Caco-2 (cell line): ENCODE measurements at regions of chr9 and their contacts with region 1.

Region 1: DNA sequence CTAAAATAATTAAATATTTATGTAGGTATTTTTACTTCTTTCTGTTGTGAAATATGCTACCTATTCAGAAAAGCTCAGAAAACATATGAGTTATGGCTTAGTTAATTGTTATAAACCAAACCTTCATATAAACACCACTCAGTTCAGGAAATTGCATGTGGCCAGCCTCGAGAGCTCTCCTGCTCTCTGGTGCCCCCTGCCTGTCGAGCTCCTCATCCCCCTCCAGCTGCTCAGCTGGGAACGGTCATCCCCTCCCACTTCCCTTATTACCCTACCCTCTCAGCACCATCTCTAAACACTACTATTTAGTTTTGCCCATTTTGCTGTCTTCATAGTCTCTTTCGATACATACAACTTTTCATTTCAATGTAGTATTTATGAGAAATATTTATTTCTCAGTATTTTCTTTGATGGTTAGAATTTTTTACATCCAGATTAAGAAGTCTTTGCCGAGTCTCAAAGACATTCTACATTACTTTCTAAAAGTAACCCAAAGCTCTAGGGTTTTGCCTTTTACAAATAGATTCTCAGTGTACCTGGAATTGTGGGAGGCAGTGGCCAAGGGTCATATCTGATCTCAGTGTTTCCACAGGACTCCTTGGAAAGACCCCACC is 51.2 kb upstream of the SEMA4D start:
- DNase-seq: peak; percentile 54 to 71
- H3K4me3 ChIP-seq: no peak overlapping the region
- H3K4me3 Mint-ChIP-seq: no peak overlapping the region
- H3K27ac Mint-ChIP-seq: no peak overlapping the region
- H3K4me1 ChIP-seq: no peaks in the 10 kb centered on the region
- H3K4me1 Mint-ChIP-seq: no peaks in the 10 kb centered on the region
- H3K27me3 ChIP-seq: no peaks in the 10 kb centered on the region
- H3K27me3 Mint-ChIP-seq: no peaks in the 10 kb centered on the region
- CTCF ChIP-seq: peak; percentile 62 to 77

Region 2: GRCh38 chr9:89318123-89319014 is 230.8 kb before region 1 on chr9 and contains the start of gene SECISBP2:
- CTCF ChIA-PET with region 1: interaction called, 3 read pairs
- POLR2A ChIA-PET with region 1: no interaction called
- intact Hi-C with region 1: loop called (anchors 1 kb)
- DNase-seq: peak; percentile 91 to 92
- H3K4me3 ChIP-seq: peak within 1 kb of the TSS; percentile 64
- H3K4me3 Mint-ChIP-seq: peak within 1 kb of the TSS; percentile 73
- H3K27ac Mint-ChIP-seq: peak within 1 kb of the TSS; percentile 89
- H3K4me1 ChIP-seq: peaks cover 14% of the 10 kb centered on the region
- H3K4me1 Mint-ChIP-seq: peaks cover 19% of the 10 kb centered on the region
- H3K27me3 ChIP-seq: no peaks in the 10 kb centered on the region
- H3K27me3 Mint-ChIP-seq: no peaks in the 10 kb centered on the region
- CTCF ChIP-seq: peak in 1 of 2 experiments; percentile 48
- total RNA-seq, gene SECISBP2: 21.0 and 23.2 TPM in 2 replicates

Region 3: GRCh38 chr9:89428901-89429890 is 119.9 kb before region 1 on chr9:
- CTCF ChIA-PET with region 1: interaction called, 3 read pairs
- POLR2A ChIA-PET with region 1: no interaction called
- intact Hi-C with region 1: loop called (anchors 5 kb)
- DNase-seq: peak in 1 of 2 experiments; percentile 10
- H3K4me3 ChIP-seq: no peak overlapping the region
- H3K4me3 Mint-ChIP-seq: no peak overlapping the region
- H3K27ac Mint-ChIP-seq: no peak overlapping the region
- H3K4me1 ChIP-seq: no peaks in the 10 kb centered on the region
- H3K4me1 Mint-ChIP-seq: no peaks in the 10 kb centered on the region
- H3K27me3 ChIP-seq: no peaks in the 10 kb centered on the region
- H3K27me3 Mint-ChIP-seq: no peaks in the 10 kb centered on the region
- CTCF ChIP-seq: peak in 1 of 2 experiments; percentile 43

Region 4: GRCh38 chr9:89497978-89498851 is 50.9 kb before region 1 on chr9 and contains the start of gene SEMA4D:
- CTCF ChIA-PET with region 1: no interaction called
- POLR2A ChIA-PET with region 1: no interaction called
- intact Hi-C with region 1: loop called (anchors 2 kb)
- DNase-seq: peak; percentile 48 to 74
- H3K4me3 ChIP-seq: peak within 1 kb of the TSS; percentile 56
- H3K4me3 Mint-ChIP-seq: peak within 1 kb of the TSS; percentile 64
- H3K27ac Mint-ChIP-seq: no peak within 1 kb of the TSS
- H3K4me1 ChIP-seq: no peaks in the 10 kb centered on the region; the same call in 1 of the 2 replicates
- H3K4me1 Mint-ChIP-seq: no peaks in the 10 kb centered on the region
- H3K27me3 ChIP-seq: no peaks in the 10 kb centered on the region
- H3K27me3 Mint-ChIP-seq: peaks cover 2% of the 10 kb centered on the region
- CTCF ChIP-seq: no peak
- total RNA-seq, gene SEMA4D: 16.0 and 17.1 TPM in 2 replicates